PC-9 (cell line): ENCODE measurements at regions of chr18 and their contacts with region 1.

Region 1: GRCh38 chr18:50203801-50204604 is 9.1 kb upstream of the MYO5B start:
- DNase-seq: peak in 1 of 2 experiments; percentile 37
- H3K4me3 ChIP-seq: peak overlapping the region; percentile 19; the same call in 1 of the 2 replicates
- H3K27ac ChIP-seq: no peak overlapping the region
- H3K4me1 ChIP-seq: no peaks in the 10 kb centered on the region
- H3K27me3 ChIP-seq: no peaks in the 10 kb centered on the region
- CTCF ChIP-seq: peak; percentile 75

Region 2: DNA sequence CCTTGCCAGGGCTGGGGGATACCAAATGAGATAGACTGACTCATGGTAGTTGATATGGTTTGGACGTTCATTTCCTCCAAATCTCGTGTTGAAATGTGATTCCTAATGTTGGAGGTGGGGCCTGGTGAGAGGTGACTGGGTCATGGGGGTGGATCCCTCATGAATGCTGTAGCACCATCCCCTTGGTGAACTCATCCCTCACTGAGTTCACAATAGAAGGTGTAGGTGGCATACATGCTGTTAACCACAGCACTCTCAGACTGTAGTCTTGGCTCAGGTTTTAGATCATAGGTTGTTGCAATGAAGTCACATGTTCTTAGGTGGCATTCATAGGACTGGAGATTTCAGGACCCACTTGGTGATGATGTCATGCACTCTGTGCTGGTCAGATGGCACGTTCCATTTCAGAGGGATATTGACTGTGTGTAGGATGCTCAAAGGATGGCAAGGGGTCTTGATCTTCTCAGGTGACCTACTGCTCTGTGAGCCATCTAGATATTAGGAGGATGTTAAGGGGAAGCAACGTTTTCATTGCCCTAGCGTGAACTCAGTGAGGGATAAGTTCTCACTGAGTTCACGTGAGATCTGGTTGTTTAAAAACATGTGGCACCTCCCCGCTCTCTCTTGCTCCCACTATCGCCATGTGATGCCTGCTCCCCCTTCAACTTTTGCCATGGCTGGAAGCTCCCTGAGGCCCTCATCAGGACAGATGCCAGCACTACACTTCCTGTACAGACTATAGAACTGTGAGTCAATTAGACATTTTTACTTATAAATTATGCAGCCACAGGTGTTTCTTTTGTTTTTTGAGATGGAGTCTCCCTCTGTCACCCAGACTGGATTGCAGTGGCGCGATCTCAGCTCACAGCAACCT is 316.9 kb before region 1 on chr18:
- CTCF ChIA-PET with region 1: no interaction called
- POLR2A ChIA-PET with region 1: no interaction called
- intact Hi-C with region 1: loop called (anchors 10 kb)
- DNase-seq: no peak
- H3K4me3 ChIP-seq: no peak overlapping the region
- H3K27ac ChIP-seq: no peak overlapping the region
- H3K4me1 ChIP-seq: peaks cover 6% of the 10 kb centered on the region
- H3K27me3 ChIP-seq: no peaks in the 10 kb centered on the region
- CTCF ChIP-seq: 0 out of 2 replicates have a peak, but pooled peaks have one; percentile 16

Region 3: DNA sequence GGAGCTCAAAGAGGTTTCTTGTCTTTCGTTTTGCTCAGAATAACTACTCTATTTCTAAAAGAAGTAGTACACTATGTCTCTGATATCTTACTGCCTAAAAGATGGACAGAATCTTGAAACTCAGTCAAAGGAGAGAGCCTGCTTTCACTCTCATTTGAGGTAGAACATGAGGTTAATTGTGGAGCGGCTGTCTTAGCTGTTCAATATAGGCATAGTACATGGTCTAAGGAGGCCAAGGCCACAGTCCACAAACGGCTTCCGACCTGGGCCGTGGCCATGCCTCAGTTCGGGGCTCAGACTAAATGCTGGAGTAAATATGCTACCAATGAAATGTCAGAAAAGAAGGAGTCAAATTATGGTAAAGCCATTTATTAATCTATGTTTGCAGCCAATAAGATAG is 204.9 kb before region 1 on chr18:
- CTCF ChIA-PET with region 1: no interaction called
- POLR2A ChIA-PET with region 1: no interaction called
- intact Hi-C with region 1: no loop called
- DNase-seq: no peak
- H3K4me3 ChIP-seq: no peak overlapping the region
- H3K27ac ChIP-seq: no peak overlapping the region
- H3K4me1 ChIP-seq: no peaks in the 10 kb centered on the region
- H3K27me3 ChIP-seq: no peaks in the 10 kb centered on the region
- CTCF ChIP-seq: no peak